ENCODE measurements at regions of chr9 and their contacts with region 1.

Region 1: DNA sequence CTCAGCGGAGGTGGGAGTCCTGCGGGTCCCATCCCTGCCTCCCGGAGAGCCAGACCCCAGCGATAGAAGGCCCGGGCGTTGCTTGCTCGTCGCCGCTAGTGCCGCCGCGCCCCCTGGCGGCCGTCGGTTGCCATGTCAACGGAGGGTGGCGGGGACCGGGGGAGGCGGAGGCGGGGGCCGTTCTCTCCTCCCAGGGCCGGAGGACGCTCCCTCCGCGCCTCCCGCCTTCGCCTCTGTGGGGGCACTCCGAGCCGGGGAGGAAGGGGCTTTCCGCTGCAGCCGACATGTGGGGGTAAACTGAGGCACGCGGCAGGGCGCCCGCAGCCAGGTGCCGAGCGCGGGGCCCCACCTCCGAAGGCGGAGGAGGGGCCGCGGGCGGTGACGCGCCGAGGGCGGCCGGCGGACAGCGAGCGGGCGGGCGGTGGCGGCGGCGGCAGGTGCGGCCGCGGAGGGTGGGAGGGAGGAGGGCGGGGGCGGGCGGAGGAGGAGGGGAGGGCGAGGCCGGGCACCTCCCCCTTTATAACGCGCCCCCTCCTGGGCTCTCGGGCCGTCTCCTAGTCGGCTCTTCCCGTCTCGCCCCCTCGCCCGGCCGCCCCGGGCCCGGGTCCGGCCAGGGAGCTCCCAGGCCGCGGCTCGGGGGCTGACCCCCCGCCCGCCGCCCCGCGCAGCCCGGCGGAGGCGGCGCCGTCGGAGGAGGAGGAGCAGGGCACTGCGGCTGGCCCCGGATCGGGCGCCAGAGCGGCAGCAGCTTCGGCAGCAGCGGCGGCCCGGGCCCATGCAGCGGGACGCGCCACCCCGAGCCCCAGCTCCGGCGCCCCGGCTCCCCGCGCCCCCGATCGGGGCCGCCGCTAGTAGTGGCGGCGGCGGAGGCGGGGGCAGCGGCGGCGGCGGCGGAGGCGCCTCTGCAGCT is 556 bp upstream of the CDK9 start:
- DNase-seq: peak; percentile 84 to 95 (median 91)
- ATAC-seq: peak; percentile 54 to 56
- H3K4me3 Mint-ChIP-seq: peak overlapping the region; percentile 71 to 92 (median 88)
- H3K27ac Mint-ChIP-seq: peak overlapping the region; percentile 93 to 99 (median 97)
- H3K4me1 Mint-ChIP-seq: peaks cover 29 to 74% (median 60%) of the 10 kb centered on the region in 4 donors
- H3K27me3 Mint-ChIP-seq: no peaks in the 10 kb centered on the region

Region 2: DNA sequence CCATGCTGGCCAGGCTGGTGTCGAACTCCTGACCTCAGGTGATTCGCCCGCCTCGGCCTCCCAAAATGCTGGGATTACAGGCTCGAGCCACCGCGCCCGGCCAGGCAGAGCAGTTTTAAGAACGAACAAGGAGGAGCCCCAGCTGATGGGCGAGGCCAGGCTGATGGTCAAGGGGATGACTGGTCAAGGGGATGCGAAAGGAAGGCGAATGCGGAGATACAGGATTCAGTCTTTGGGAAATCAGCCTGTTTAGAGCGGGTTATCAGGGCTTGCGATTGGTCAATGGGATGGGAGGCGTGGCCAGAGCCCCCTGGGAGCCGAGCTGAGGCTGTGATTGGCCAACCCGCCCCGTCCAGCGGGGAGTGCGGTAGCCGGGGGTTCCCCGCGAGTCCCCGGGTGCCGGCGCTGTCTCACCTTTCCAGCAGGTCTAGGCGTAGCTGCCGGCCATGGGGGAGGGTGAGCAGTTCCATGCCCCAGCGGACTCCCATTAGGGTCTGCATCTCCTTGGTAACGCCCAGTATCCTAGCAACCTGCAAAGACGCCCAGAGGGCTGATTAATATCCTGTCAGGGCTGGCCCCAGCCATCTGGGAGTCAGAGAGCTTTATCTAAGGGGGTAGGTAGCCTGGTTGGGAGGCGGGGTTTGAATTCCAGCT is 42.7 kb before region 1 on chr9:
- POLR2A ChIA-PET with region 1: interaction called, 54 read pairs
- DNase-seq: no peak
- ATAC-seq: no peak
- H3K4me3 Mint-ChIP-seq: no peak overlapping the region
- H3K27ac Mint-ChIP-seq: peak overlapping the region in 3 of 10 donors; percentile 27 to 84 (median 39)
- H3K4me1 Mint-ChIP-seq: peaks cover 6 to 16% (median 11%) of the 10 kb centered on the region in 4 donors
- H3K27me3 Mint-ChIP-seq: no peaks in the 10 kb centered on the region

Region 3: DNA sequence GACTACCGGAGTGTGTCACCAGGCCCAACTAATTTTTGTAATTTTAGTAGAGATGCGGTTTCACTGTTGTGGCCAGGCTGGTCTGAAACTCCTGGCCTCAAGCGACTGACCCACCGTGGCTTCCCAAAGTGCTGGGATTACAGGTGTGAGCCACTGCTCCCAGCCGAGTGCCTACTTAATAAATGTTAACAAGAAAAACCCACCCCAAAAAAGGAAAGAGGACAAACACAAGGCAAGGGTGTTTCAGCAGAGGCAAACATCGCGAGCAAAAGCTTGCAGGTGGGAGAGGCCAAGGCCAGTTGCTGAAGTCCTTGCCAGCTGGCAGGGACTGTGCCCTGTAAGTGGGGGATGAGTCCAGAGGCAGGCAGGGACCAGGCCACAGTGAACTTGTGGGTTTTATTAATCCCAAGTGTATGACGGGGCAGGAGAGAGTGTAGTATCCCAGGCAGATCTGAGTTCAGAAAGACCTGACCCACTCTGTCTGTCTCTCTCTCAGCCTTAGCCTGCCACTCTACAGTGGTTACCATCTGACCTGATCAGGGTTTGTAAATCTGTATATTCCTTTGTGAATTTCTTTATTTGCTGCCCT is 11.0 kb after region 1 on chr9:
- POLR2A ChIA-PET with region 1: interaction called, 46 read pairs
- DNase-seq: no peak
- ATAC-seq: peak; percentile 26 to 27
- H3K4me3 Mint-ChIP-seq: peak overlapping the region; percentile 58 to 91 (median 80)
- H3K27ac Mint-ChIP-seq: peak overlapping the region; percentile 77 to 97 (median 92)
- H3K4me1 Mint-ChIP-seq: peaks cover 14 to 39% (median 29%) of the 10 kb centered on the region in 4 donors
- H3K27me3 Mint-ChIP-seq: no peaks in the 10 kb centered on the region

Region 4: DNA sequence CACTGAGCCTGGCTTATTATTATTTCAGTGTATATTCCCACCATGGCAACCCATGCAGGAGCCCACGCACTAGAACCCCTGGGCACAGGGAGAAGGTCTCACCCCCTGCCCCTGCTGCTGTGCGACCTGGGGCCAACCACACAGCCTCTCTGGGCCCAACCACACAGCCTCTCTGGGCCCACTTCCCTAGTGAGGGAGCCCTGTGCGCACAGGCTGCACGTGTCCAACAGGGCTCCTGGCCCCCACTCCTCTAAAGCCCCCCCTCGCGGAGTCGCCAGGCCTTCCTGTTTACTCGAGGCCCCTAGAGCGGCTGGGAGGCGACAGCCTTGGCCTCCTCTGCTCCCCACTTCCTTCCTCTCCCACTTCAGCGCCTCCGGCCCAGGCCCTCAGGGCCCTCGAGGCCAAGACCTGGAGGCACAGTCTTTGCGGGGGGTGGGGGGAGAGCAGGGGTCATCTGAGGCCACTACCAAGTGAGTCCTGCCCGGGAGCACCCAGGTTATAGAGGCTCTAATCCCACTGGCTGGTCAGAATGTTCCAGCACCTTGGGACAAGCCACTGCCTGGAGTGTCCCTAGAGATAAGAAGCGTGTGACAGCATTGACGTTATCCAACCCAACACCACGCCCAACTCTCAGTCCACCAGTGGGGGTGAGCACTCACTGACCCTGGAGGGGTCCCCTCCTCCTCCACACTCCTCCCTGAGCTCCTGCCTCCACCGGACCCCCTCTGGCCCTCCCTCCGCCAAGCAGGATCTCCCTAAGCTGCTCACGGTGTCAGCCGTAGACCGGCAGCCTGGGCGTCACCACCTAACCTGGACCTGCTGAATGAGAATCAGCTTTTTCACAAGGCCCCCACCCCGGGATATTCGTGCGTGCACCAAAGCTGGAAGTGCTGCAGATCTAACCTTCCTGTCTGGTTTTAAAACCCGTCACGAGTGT is 77.1 kb after region 1 on chr9:
- POLR2A ChIA-PET with region 1: interaction called, 22 read pairs
- DNase-seq: peak in 8 of 10 donors; percentile 37 to 80 (median 52)
- ATAC-seq: peak; percentile 58 to 62
- H3K4me3 Mint-ChIP-seq: peak overlapping the region; percentile 48 to 80 (median 69)
- H3K27ac Mint-ChIP-seq: peak overlapping the region; percentile 94 to 97 (median 96)
- H3K4me1 Mint-ChIP-seq: peaks cover 27 to 64% (median 50%) of the 10 kb centered on the region in 4 donors
- H3K27me3 Mint-ChIP-seq: no peaks in the 10 kb centered on the region

Region 5: DNA sequence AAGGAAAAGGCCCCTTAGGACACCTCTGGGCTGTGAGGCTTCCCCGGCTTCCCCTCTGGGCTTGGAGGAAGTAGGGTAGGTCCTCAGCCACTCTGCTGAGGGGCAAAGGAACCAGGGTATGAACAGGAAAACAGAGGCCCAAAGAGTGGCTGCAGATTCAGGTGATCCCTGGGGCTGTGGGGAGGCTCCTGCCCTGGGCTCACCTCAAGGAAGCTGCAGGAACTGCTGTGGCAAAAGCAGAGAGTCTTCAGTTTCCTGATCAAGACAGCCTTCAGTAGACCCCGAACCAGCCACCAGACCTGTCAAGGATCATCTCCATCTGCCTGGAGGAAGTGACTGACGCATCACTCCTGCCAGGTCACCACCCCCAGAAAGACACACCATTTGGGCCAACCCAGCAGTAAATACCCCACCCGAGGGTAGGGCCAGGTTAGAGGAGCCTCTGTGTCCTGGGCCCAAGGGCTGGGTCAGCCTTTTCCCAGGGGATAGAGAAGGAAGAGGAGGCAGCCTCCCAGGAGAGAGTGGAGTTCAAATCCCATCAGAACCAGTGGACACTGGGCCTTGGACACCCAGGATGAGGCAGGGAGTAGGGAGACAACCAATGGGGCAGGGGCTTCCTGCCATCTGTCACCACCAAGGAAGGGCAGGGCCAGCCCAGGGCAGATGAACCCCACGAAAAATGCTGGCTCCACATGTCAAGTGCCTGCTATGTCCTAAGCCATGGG is 119.9 kb after region 1 on chr9:
- POLR2A ChIA-PET with region 1: interaction called, 12 read pairs
- DNase-seq: peak; percentile 41 to 80 (median 63)
- ATAC-seq: peak; percentile 48 to 62
- H3K4me3 Mint-ChIP-seq: peak overlapping the region; percentile 82 to 99 (median 95)
- H3K27ac Mint-ChIP-seq: peak overlapping the region; percentile 98 to 100 (median 100)
- H3K4me1 Mint-ChIP-seq: peaks cover 19 to 61% (median 51%) of the 10 kb centered on the region in 4 donors
- H3K27me3 Mint-ChIP-seq: no peaks in the 10 kb centered on the region

Measured in naive thymus-derived CD8-positive, alpha-beta T cell (primary cell).